WTC11 (cell line): ENCODE measurements at regions of chr5 and their contacts with region 1.

Region 1: GRCh38 chr5:112691758-112692157 is 45.9 kb upstream of the APC start:
- DNase-seq: peak; percentile 49
- ATAC-seq: peak; percentile 87
- H3K4me3 Mint-ChIP-seq: no peak overlapping the region
- H3K27ac Mint-ChIP-seq: no peak overlapping the region
- H3K4me1 Mint-ChIP-seq: peaks cover 19% of the 10 kb centered on the region
- H3K27me3 Mint-ChIP-seq: no peaks in the 10 kb centered on the region
- CTCF ChIP-seq: no peak; the same call in 1 of the 2 replicates

Region 2: GRCh38 chr5:112551419-112552032 is 140.2 kb before region 1 on chr5:
- CTCF ChIA-PET with region 1: interaction called, 11 read pairs
- POLR2A ChIA-PET with region 1: no interaction called
- DNase-seq: no peak
- ATAC-seq: peak; percentile 65
- H3K4me3 Mint-ChIP-seq: no peak overlapping the region
- H3K27ac Mint-ChIP-seq: no peak overlapping the region
- H3K4me1 Mint-ChIP-seq: 0 out of 2 replicates have a peak, but pooled peaks cover 3% of the 10 kb centered on the region
- H3K27me3 Mint-ChIP-seq: no peaks in the 10 kb centered on the region
- CTCF ChIP-seq: peak; percentile 52

Region 3: DNA sequence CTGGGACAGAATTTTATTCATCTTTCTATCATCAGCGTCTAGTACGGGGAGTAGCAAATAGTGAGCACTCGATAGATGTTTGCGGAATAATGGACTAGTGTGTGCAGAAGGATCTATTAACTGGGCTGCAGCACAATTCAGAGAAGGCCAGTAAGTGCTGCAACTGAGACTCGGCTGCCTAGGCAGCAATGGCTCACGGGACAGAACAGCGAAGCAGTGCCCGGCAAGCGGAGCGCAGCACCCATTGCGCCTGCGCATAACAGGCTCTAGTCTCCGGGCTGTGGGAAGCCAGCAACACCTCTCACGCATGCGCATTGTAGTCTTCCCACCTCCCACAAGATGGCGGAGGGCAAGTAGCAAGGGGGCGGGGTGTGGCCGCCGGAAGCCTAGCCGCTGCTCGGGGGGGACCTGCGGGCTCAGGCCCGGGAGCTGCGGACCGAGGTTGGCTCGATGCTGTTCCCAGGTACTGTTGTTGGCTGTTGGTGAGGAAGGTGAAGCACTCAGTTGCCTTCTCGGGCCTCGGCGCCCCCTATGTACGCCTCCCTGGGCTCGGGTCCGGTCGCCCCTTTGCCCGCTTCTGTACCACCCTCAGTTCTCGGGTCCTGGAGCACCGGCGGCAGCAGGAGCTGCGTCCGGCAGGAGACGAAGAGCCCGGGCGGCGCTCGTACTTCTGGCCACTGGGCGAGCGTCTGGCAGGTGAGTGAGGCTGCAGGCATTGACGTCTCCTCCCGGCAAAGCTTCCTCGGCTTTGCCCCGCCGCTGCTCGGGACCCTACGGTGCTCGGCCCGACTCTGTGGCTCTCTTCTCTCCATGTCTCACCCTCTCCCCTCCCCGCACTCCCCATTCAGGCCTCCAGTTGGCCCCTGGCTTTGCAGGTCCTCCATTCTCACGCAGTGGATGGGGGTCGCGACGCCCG is 15.7 kb after region 1 on chr5:
- CTCF ChIA-PET with region 1: interaction called, 19 read pairs
- POLR2A ChIA-PET with region 1: interaction called, 7 read pairs
- DNase-seq: peak; percentile 97
- ATAC-seq: peak; percentile 87
- H3K4me3 Mint-ChIP-seq: peak overlapping the region; percentile 92
- H3K27ac Mint-ChIP-seq: peak overlapping the region; percentile 90
- H3K4me1 Mint-ChIP-seq: peaks cover 38% of the 10 kb centered on the region
- H3K27me3 Mint-ChIP-seq: no peaks in the 10 kb centered on the region
- CTCF ChIP-seq: no peak

Region 4: DNA sequence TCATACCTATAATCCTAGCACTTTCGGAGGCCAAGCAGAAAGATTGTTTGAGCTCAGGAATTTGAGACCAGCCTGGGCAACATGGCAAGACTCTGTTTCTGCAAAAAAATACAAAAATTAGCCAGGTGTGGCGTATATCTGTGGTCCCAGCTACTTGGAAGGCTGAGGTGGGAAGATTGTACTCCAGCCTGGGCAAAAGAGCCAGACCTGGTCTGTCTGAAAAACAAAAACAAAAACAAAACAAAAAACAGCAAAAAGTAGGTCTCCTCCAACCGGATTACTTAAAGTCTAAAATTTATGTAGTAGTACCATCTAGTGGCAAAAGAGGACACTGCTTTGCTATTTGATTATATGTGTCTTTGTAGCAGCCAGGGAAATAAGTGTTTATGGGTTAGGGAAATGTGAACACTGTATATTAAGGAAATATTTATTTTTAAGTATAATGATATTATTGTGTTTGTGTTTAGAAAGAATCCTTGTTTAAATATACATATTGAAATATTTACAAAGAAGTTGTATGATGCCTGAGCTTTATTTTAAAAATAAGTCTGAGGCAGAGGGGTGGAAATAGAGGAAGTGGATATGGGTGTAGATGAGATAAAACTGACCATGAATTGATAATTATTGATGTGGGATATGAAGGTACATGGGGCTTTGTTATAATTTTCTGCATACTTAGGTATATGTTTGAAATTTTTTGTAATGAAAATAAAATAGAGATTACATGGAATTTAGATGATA is 65.9 kb after region 1 on chr5:
- CTCF ChIA-PET with region 1: interaction called, 91 read pairs
- POLR2A ChIA-PET with region 1: no interaction called
- DNase-seq: no peak
- ATAC-seq: peak; percentile 73
- H3K4me3 Mint-ChIP-seq: no peak overlapping the region
- H3K27ac Mint-ChIP-seq: 0 out of 2 replicates have a peak overlapping the region, but pooled peaks have one; percentile 64
- H3K4me1 Mint-ChIP-seq: no peaks in the 10 kb centered on the region
- H3K27me3 Mint-ChIP-seq: no peaks in the 10 kb centered on the region
- CTCF ChIP-seq: peak; percentile 43

Region 5: GRCh38 chr5:112983363-112983762 is 291.6 kb after region 1 on chr5:
- CTCF ChIA-PET with region 1: no interaction called
- POLR2A ChIA-PET with region 1: no interaction called
- DNase-seq: no peak
- ATAC-seq: peak; percentile 67
- H3K4me3 Mint-ChIP-seq: no peak overlapping the region
- H3K27ac Mint-ChIP-seq: peak overlapping the region; percentile 78
- H3K4me1 Mint-ChIP-seq: peaks cover 61% of the 10 kb centered on the region
- H3K27me3 Mint-ChIP-seq: no peaks in the 10 kb centered on the region
- CTCF ChIP-seq: no peak